CD8-positive, alpha-beta T cell (primary cell): ENCODE measurements at regions of chr2 and their contacts with region 1.

Region 1: GRCh38 chr2:230864598-230865306 is at the start of gene ITM2C:
- DNase-seq: peak; percentile 57 to 90 (median 77)
- ATAC-seq: peak; percentile 79
- H3K4me3 ChIP-seq: peak within 1 kb of the TSS; percentile 52 to 65
- H3K4me3 Mint-ChIP-seq: peak within 1 kb of the TSS; percentile 96
- H3K27ac ChIP-seq: peak within 1 kb of the TSS in 1 of 2 experiments; percentile 37
- H3K27ac Mint-ChIP-seq: peak within 1 kb of the TSS; percentile 80
- H3K4me1 ChIP-seq: peaks cover 55% of the 10 kb centered on the region
- H3K4me1 Mint-ChIP-seq: peaks cover 46% of the 10 kb centered on the region
- H3K27me3 ChIP-seq: peaks cover 0 to 5% of the 10 kb centered on the region in 2 experiments
- H3K27me3 Mint-ChIP-seq: no peaks in the 10 kb centered on the region
- CTCF ChIP-seq: peak; percentile 51
- total RNA-seq, gene ITM2C: 23.2 to 27.4 TPM

Region 2: DNA sequence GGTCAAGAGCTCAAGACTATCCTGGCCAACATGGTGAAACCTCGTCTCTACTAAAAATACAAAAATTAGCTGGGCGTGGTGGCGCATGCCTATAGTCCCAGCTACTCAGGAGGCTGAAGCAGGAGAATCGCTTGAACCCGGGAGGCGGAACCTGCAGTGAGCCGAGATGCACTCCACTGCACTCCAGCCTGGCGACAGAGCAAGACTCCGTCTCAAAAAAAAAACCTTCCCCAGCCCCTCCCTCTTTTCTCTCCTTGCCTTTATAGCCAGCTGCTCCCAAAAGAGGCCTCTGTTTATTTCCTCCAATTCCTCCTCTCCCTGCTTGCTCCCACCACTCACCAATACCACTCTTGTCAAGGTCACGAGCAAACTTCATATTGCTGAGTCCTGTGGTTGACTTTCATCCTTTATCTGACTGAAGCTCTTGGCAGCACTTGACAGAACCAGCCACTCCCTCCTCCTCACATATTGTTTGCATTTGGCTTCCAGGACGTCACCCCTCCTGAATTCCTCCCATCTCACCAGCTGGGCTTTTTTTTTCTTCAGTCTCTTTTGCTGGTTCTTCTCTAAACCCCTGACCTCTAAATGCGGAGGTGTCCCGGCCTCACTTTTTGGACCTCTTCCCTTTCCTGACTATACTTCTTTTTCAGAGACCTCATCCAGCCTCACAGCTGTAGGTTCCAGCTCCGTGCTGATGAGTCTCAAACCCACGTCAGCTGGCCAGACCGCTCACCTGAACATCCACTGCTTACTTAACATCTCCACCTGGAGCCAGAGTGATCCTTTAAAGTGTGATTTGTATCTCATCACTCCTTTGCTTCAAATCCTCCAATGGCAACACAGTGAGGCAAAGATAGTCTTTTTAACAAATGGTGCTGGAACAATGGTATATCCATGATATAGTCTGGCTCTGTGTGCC is 236.7 kb before region 1 on chr2:
- CTCF ChIA-PET with region 1: no interaction called
- POLR2A ChIA-PET with region 1: no interaction called
- intact Hi-C with region 1: no loop called
- DNase-seq: no peak
- ATAC-seq: no peak
- H3K4me3 ChIP-seq: no peak overlapping the region
- H3K4me3 Mint-ChIP-seq: no peak overlapping the region
- H3K27ac ChIP-seq: no peak overlapping the region
- H3K27ac Mint-ChIP-seq: no peak overlapping the region
- H3K4me1 ChIP-seq: no peaks in the 10 kb centered on the region
- H3K4me1 Mint-ChIP-seq: peaks cover 14% of the 10 kb centered on the region
- H3K27me3 ChIP-seq: no peaks in the 10 kb centered on the region
- H3K27me3 Mint-ChIP-seq: no peaks in the 10 kb centered on the region
- CTCF ChIP-seq: no peak

Region 3: GRCh38 chr2:230829293-230829692 is 35.5 kb before region 1 on chr2:
- CTCF ChIA-PET with region 1: no interaction called
- POLR2A ChIA-PET with region 1: no interaction called
- intact Hi-C with region 1: no loop called
- DNase-seq: no peak
- ATAC-seq: no peak
- H3K4me3 ChIP-seq: no peak overlapping the region
- H3K4me3 Mint-ChIP-seq: no peak overlapping the region
- H3K27ac ChIP-seq: no peak overlapping the region
- H3K27ac Mint-ChIP-seq: no peak overlapping the region
- H3K4me1 ChIP-seq: peaks cover 5% of the 10 kb centered on the region
- H3K4me1 Mint-ChIP-seq: peaks cover 6% of the 10 kb centered on the region
- H3K27me3 ChIP-seq: peaks cover 11 to 12% of the 10 kb centered on the region in 2 experiments
- H3K27me3 Mint-ChIP-seq: peaks cover 44% of the 10 kb centered on the region
- CTCF ChIP-seq: no peak

Region 4: GRCh38 chr2:230847883-230848388 is 16.8 kb before region 1 on chr2:
- CTCF ChIA-PET with region 1: interaction called, 17 read pairs
- POLR2A ChIA-PET with region 1: no interaction called
- intact Hi-C with region 1: loop called in 1 of 2 experiments (anchors 1 kb)
- DNase-seq: peak; percentile 73 to 94 (median 87)
- ATAC-seq: peak; percentile 91
- H3K4me3 ChIP-seq: no peak overlapping the region
- H3K4me3 Mint-ChIP-seq: no peak overlapping the region
- H3K27ac ChIP-seq: no peak overlapping the region
- H3K27ac Mint-ChIP-seq: no peak overlapping the region
- H3K4me1 ChIP-seq: peaks cover 8% of the 10 kb centered on the region
- H3K4me1 Mint-ChIP-seq: peaks cover 6% of the 10 kb centered on the region
- H3K27me3 ChIP-seq: peaks cover 0 to 9% of the 10 kb centered on the region in 2 experiments
- H3K27me3 Mint-ChIP-seq: peaks cover 14% of the 10 kb centered on the region
- CTCF ChIP-seq: peak; percentile 82

Region 5: GRCh38 chr2:230877732-230878598 is 13.2 kb after region 1 on chr2:
- CTCF ChIA-PET with region 1: interaction called, 7 read pairs
- POLR2A ChIA-PET with region 1: interaction called, 25 read pairs
- intact Hi-C with region 1: loop called (anchors 1 kb)
- DNase-seq: peak; percentile 42 to 94 (median 78)
- ATAC-seq: peak; percentile 85
- H3K4me3 ChIP-seq: peak overlapping the region; percentile 1 to 17
- H3K4me3 Mint-ChIP-seq: peak overlapping the region; percentile 67
- H3K27ac ChIP-seq: peak overlapping the region; percentile 22 to 45
- H3K27ac Mint-ChIP-seq: peak overlapping the region; percentile 90
- H3K4me1 ChIP-seq: peaks cover 32% of the 10 kb centered on the region
- H3K4me1 Mint-ChIP-seq: peaks cover 31% of the 10 kb centered on the region
- H3K27me3 ChIP-seq: peaks cover 0 to 5% of the 10 kb centered on the region in 2 experiments
- H3K27me3 Mint-ChIP-seq: no peaks in the 10 kb centered on the region
- CTCF ChIP-seq: no peak

Region 6: DNA sequence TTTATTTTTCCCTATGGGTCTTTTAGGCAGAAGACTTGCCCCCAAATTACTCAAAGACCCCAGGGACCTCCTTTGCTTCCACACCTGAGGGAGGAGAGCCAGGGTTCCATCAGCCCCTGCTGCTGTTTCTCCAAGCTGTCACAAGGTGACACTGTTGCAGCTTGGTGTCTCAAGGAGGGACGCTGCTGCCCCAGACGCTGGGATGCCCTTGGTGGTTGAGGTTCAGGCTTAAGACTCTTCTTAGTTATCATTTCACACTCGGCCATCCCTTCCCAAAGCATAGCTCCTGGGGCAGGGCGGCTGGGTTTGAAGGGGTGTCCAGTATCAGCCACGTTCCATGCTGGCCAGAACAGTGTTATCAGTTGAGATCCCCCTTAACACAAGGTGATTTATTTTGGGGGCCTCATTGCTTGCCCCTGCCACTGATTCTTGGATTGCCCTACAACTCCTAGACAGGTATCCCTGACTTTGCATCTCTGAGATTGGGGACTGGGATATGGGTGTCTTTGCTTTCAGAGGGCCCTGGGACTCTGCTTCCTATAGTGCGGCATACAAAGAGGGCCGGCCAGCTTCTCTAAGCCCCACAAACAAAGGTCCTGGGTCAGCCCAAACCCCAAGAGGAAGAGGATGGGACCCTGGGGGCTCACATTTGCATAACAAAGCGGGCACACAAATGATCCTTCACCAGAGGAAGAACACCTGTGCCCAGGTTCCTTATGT is 37.6 kb after region 1 on chr2:
- CTCF ChIA-PET with region 1: interaction called, 6 read pairs
- POLR2A ChIA-PET with region 1: no interaction called
- intact Hi-C with region 1: loop called (anchors 1 to 5 kb)
- DNase-seq: peak in 7 of 9 experiments; percentile 40 to 78 (median 60)
- ATAC-seq: no peak
- H3K4me3 ChIP-seq: no peak overlapping the region
- H3K4me3 Mint-ChIP-seq: no peak overlapping the region
- H3K27ac ChIP-seq: no peak overlapping the region
- H3K27ac Mint-ChIP-seq: no peak overlapping the region
- H3K4me1 ChIP-seq: peaks cover 24% of the 10 kb centered on the region
- H3K4me1 Mint-ChIP-seq: peaks cover 34% of the 10 kb centered on the region
- H3K27me3 ChIP-seq: no peaks in the 10 kb centered on the region
- H3K27me3 Mint-ChIP-seq: no peaks in the 10 kb centered on the region
- CTCF ChIP-seq: peak; percentile 84

Region 7: DNA sequence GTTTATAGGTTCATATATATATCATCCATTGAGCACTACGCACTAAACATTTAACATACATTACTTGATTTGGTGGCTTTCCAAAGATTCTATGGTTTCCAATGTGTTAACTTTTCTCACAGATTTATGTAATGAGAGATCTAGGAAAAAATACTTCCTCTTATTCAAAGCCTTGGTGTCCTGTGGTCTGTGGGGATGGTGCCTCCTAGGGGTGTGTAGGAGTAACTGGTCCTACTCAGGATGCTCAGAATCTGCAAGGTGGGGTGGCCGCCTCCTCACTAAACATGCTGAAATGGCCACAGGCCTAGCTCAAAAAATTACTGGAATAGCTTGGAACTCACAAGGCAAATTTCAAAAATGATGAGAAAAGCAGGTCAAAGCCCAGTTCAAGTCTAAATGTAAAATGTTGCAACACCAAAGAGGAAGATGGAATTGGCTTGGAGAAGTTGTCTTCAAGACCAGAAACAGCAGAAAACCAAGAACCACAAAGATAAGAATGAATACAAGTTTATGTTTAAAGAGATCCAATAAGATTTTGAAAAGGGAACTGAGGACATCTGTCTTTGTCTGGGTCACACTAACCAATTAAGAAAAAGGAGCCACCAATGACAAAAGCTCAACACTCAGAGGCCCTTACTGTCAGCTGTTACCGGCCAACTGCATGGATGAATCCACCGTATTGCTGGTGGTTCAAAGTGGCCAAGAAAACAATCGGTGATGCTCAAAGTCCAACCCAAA is 48.8 kb after region 1 on chr2:
- CTCF ChIA-PET with region 1: interaction called, 3 read pairs
- POLR2A ChIA-PET with region 1: interaction called, 3 read pairs
- intact Hi-C with region 1: loop called in 1 of 2 experiments (anchors 2 kb)
- DNase-seq: peak in 3 of 9 experiments; percentile 49 to 71 (median 59)
- ATAC-seq: peak; percentile 76
- H3K4me3 ChIP-seq: no peak overlapping the region
- H3K4me3 Mint-ChIP-seq: no peak overlapping the region
- H3K27ac ChIP-seq: no peak overlapping the region
- H3K27ac Mint-ChIP-seq: no peak overlapping the region
- H3K4me1 ChIP-seq: peaks cover 2% of the 10 kb centered on the region
- H3K4me1 Mint-ChIP-seq: peaks cover 38% of the 10 kb centered on the region
- H3K27me3 ChIP-seq: peaks cover 0 to under 1% of the 10 kb centered on the region in 2 experiments
- H3K27me3 Mint-ChIP-seq: peaks cover 2% of the 10 kb centered on the region
- CTCF ChIP-seq: peak; percentile 41